PC-9 (cell line): ENCODE measurements at regions of chr19 and their contacts with region 1.

Region 1: DNA sequence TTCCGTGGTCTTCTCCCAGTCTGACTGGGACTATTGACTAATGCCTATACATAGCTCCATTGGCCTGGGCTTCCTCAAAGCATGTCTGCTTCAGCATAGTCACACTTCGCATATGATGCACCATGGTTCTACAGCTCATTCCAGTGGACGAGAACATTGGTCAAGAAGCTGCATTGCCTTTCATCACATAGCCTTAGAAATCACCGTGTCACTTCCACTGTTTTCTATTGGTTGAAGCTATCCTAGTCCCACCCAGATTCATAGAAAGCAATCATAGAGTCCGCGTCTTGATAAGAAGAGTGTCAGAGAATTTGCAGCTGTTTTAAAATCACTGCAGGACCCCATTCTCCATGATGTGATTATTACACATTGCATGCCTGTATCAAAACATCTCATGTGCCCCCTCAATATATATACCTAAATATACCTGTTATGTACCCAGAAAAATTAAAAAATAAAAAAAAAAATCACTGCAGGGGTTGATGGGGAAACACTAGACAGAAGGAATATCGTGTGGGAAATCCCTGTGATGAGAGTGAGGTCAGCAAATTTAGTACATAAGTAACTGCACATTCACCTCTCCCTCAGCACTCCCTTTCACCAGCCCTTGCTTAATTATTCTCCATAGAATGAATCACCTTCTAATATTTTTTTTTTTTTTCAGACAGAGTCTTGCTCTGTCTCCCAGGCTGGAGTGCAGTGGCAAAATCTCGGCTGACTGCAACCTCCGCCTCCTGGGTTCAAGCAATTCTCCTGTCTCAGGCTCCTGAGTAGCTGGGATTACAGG is 2.2 kb upstream of the ARHGAP33 start:
- DNase-seq: peak in 1 of 2 experiments; percentile 51
- H3K4me3 ChIP-seq: no peak overlapping the region
- H3K27ac ChIP-seq: no peak overlapping the region
- H3K4me1 ChIP-seq: no peaks in the 10 kb centered on the region
- H3K27me3 ChIP-seq: no peaks in the 10 kb centered on the region
- CTCF ChIP-seq: no peak

Region 2: GRCh38 chr19:35648017-35648961 is 124.9 kb before region 1 on chr19 and contains the start of gene COX6B1:
- CTCF ChIA-PET with region 1: no interaction called
- POLR2A ChIA-PET with region 1: interaction called, 11 read pairs
- intact Hi-C with region 1: no loop called
- DNase-seq: peak; percentile 91 to 96
- H3K4me3 ChIP-seq: peak within 1 kb of the TSS; percentile 78
- H3K27ac ChIP-seq: peak within 1 kb of the TSS; percentile 2; the same call in 1 of the 2 replicates
- H3K4me1 ChIP-seq: peaks cover 11% of the 10 kb centered on the region; the same call in 1 of the 2 replicates
- H3K27me3 ChIP-seq: no peaks in the 10 kb centered on the region
- CTCF ChIP-seq: no peak
- total RNA-seq, gene COX6B1: 441 and 489 TPM in 2 replicates

Region 3: DNA sequence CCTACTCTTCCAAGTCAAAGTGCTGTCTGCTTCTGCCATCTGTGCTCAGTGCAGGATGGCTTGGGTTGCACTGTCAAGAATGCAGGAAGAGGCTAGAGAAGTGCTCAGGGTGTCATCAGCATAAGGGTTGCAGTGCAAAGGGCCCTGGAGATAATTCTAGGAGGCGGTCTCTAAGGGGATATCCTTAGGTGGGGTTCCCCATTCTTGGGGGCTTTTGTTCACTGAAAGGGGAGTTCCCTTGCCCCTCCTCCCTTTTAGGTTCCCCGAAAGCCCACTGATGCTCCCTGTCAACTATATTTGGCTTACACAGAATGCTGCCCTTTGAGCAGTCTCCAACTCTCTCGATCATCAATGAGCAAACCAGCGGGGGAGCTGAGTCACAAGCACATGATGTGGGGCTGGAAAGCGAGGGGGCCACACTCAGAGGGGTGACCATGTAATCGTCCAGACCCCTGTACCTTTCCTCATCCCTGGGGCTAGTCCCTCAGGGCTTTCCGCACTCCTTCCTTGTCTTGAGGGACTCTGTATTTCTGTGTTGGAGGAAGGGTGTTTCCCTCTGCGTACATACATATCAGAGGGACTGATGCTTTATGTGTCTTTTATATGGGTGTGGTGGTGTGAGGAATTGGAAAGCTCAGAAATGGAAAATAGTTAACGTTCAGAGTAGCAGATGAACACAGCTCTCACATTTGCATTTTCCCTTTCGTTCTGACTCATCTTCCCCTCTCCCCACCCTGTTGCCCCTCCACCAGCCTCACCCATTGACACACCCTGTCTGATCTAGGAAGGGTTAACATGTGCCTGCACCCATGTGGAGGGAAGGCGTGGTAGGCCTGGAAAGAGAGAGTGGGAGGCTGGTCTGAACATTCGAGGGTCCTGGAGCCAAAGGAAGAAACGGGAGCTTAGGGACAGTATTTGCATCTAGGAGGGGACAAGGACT is 62.2 kb before region 1 on chr19:
- CTCF ChIA-PET with region 1: no interaction called
- POLR2A ChIA-PET with region 1: no interaction called
- intact Hi-C with region 1: no loop called
- DNase-seq: no peak
- H3K4me3 ChIP-seq: no peak overlapping the region
- H3K27ac ChIP-seq: no peak overlapping the region
- H3K4me1 ChIP-seq: peaks cover 20% of the 10 kb centered on the region
- H3K27me3 ChIP-seq: no peaks in the 10 kb centered on the region
- CTCF ChIP-seq: no peak

Region 4: DNA sequence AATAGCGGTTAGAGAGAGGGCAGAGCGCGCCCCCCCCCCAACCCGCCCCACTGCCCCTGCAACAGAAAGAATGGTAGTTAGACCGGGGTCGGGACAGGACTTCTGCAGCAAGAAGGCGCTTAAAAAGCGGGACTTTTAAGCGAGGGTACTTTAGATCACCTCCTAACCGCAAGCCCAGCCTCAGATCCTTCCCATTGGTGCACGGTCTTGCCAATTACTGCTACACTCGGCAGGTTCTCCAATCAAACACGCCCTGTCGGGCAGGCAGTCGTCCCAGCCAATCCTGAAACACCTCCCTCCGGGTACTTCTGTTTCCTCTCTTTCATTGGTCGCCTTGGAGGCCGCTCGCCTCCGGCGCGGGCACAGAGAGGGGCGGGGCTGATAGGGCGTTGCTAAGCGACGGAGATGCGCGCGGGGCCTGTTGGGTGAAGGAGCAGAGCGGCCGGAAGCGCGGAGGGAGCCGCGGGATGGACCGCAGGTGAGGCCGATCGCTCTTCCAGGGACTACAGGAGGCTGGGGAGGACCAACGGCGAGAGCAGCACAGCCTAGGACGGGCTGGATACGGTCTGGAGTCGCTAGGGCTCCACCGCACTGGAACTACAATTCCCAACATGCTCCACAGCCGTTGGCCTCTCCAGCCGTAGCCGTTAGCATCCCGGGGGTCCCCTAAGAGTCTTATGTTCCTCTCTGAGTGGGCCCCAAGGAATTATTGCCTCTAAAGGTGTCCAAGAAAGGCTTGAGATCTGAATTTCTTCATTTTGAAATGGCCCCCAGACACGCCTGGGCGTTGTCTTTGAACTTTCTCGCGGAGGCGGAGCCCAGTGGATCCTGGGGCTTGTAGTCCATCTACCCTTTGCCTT is 15.2 kb before region 1 on chr19 and contains the start of gene PROSER3:
- CTCF ChIA-PET with region 1: no interaction called
- POLR2A ChIA-PET with region 1: interaction called, 14 read pairs
- intact Hi-C with region 1: no loop called
- DNase-seq: peak; percentile 98 to 99
- H3K4me3 ChIP-seq: peak within 1 kb of the TSS; percentile 67
- H3K27ac ChIP-seq: peak within 1 kb of the TSS; percentile 67
- H3K4me1 ChIP-seq: peaks cover 13% of the 10 kb centered on the region
- H3K27me3 ChIP-seq: no peaks in the 10 kb centered on the region
- CTCF ChIP-seq: no peak
- total RNA-seq, gene PROSER3: 38.0 and 52.2 TPM in 2 replicates

Region 5: GRCh38 chr19:35797663-35798062 is 24.4 kb after region 1 on chr19:
- CTCF ChIA-PET with region 1: no interaction called
- POLR2A ChIA-PET with region 1: no interaction called
- intact Hi-C with region 1: no loop called
- DNase-seq: no peak
- H3K4me3 ChIP-seq: no peak overlapping the region
- H3K27ac ChIP-seq: no peak overlapping the region
- H3K4me1 ChIP-seq: no peaks in the 10 kb centered on the region
- H3K27me3 ChIP-seq: peaks cover 31% of the 10 kb centered on the region
- CTCF ChIP-seq: no peak

Region 6: DNA sequence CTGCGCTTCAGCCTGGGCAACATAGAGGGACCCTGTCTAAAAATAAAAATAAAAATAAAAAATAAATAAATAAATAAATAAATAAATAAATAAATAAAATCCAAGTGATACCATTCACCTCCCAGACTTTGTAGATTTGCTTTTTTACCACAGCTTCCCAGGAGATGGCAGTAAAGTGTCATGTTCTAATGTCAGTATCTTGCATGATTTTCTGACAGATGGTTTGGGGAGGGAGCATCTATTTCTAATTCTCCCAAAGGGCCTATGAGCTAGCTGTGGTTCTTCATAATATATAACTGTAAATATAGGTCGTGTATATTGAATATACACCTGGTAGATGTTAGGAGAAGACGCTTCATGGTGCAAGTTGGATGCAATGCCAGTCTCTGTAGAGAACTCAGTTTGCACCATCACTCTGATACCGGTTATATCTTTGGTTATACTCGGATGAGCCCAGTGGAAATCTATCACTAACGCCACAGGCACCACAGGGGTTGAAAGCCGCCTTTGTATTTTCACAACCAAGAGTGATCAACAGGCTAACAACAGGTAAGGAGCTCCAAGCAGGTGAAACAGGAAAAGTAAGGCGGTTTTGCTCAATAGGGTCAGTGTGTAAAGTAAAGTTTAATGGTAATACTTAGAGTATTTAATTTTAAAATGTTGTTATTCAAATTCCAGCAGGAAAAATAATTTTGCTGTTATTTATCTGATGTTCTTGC is 109.1 kb after region 1 on chr19:
- CTCF ChIA-PET with region 1: no interaction called
- POLR2A ChIA-PET with region 1: interaction called, 26 read pairs
- intact Hi-C with region 1: no loop called
- DNase-seq: peak in 1 of 2 experiments; percentile 33
- H3K4me3 ChIP-seq: no peak overlapping the region
- H3K27ac ChIP-seq: no peak overlapping the region
- H3K4me1 ChIP-seq: no peaks in the 10 kb centered on the region
- H3K27me3 ChIP-seq: peaks cover 23% of the 10 kb centered on the region
- CTCF ChIP-seq: peak; percentile 74